ENCODE measurements at regions of chr11 and their contacts with region 1.

Region 1: DNA sequence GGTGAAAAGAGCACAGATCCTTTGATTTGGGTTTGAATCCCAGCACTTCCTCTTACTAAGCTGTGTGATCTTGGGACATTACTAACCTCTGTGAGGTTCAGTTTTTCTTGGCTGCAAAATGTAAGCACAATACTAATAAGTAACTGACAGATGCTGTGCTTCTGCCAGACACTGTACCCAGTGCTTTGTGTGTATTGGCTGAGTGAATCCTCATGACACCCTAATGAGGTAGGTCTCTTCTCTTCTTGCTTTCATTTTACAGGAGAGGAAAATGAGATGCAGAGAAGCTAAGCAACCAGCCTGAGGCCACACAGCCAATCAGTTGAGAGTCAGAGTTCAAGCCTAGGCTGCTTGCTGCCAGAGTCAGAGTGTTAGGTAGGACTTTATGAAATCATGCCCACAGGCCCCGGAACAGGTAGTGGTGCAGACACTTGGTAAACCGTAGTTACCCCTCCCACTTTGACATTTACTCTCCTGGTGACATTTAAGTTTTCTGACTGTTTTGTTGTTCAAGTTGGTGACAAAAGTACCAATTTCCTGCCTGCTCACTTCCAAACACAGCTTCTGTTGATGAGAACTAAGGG is 21.2 kb downstream of the PTPRJ start:
- DNase-seq: peak; percentile 68 to 97 (median 78)
- ATAC-seq: peak; percentile 90
- H3K4me3 ChIP-seq: peak overlapping the region; percentile 24
- H3K4me3 Mint-ChIP-seq: peak overlapping the region; percentile 74
- H3K27ac ChIP-seq: peak overlapping the region; percentile 63 to 74
- H3K27ac Mint-ChIP-seq: peak overlapping the region; percentile 93
- H3K4me1 ChIP-seq: peaks cover 92% of the 10 kb centered on the region
- H3K4me1 Mint-ChIP-seq: peaks cover 91% of the 10 kb centered on the region
- H3K27me3 ChIP-seq: no peaks in the 10 kb centered on the region
- H3K27me3 Mint-ChIP-seq: no peaks in the 10 kb centered on the region
- CTCF ChIP-seq: no peak

Region 2: GRCh38 chr11:47750725-47751124 is 250.8 kb before region 1 on chr11:
- CTCF ChIA-PET with region 1: no interaction called
- POLR2A ChIA-PET with region 1: no interaction called
- intact Hi-C with region 1: no loop called
- DNase-seq: no peak
- ATAC-seq: no peak
- H3K4me3 ChIP-seq: no peak overlapping the region
- H3K4me3 Mint-ChIP-seq: no peak overlapping the region
- H3K27ac ChIP-seq: no peak overlapping the region
- H3K27ac Mint-ChIP-seq: peak overlapping the region; percentile 47
- H3K4me1 ChIP-seq: no peaks in the 10 kb centered on the region
- H3K4me1 Mint-ChIP-seq: peaks cover 21% of the 10 kb centered on the region
- H3K27me3 ChIP-seq: no peaks in the 10 kb centered on the region
- H3K27me3 Mint-ChIP-seq: no peaks in the 10 kb centered on the region
- CTCF ChIP-seq: no peak

Region 3: GRCh38 chr11:47863189-47863892 is 138.2 kb before region 1 on chr11:
- CTCF ChIA-PET with region 1: no interaction called
- POLR2A ChIA-PET with region 1: no interaction called
- intact Hi-C with region 1: loop called in 1 of 2 experiments (anchors 10 kb)
- DNase-seq: peak in 3 of 14 experiments; percentile 46 to 84 (median 49)
- ATAC-seq: peak; percentile 71
- H3K4me3 ChIP-seq: no peak overlapping the region
- H3K4me3 Mint-ChIP-seq: peak overlapping the region; percentile 43
- H3K27ac ChIP-seq: no peak overlapping the region
- H3K27ac Mint-ChIP-seq: peak overlapping the region; percentile 36
- H3K4me1 ChIP-seq: peaks cover 33% of the 10 kb centered on the region
- H3K4me1 Mint-ChIP-seq: peaks cover 51% of the 10 kb centered on the region
- H3K27me3 ChIP-seq: no peaks in the 10 kb centered on the region
- H3K27me3 Mint-ChIP-seq: no peaks in the 10 kb centered on the region
- CTCF ChIP-seq: no peak

Region 4: GRCh38 chr11:47941907-47942558 is 59.5 kb before region 1 on chr11:
- CTCF ChIA-PET with region 1: no interaction called
- POLR2A ChIA-PET with region 1: no interaction called
- intact Hi-C with region 1: no loop called
- DNase-seq: no peak
- ATAC-seq: no peak
- H3K4me3 ChIP-seq: no peak overlapping the region
- H3K4me3 Mint-ChIP-seq: no peak overlapping the region
- H3K27ac ChIP-seq: no peak overlapping the region
- H3K27ac Mint-ChIP-seq: no peak overlapping the region
- H3K4me1 ChIP-seq: peaks cover 9% of the 10 kb centered on the region
- H3K4me1 Mint-ChIP-seq: peaks cover 10% of the 10 kb centered on the region
- H3K27me3 ChIP-seq: no peaks in the 10 kb centered on the region
- H3K27me3 Mint-ChIP-seq: no peaks in the 10 kb centered on the region
- CTCF ChIP-seq: no peak

Region 5: GRCh38 chr11:47980245-47981049 is 21.1 kb before region 1 on chr11 and contains the start of gene PTPRJ:
- CTCF ChIA-PET with region 1: interaction called, 3 read pairs
- POLR2A ChIA-PET with region 1: interaction called, 19 read pairs
- intact Hi-C with region 1: loop called (anchors 2 kb)
- DNase-seq: peak; percentile 36 to 88 (median 57)
- ATAC-seq: peak; percentile 68
- H3K4me3 ChIP-seq: peak within 1 kb of the TSS; percentile 70
- H3K4me3 Mint-ChIP-seq: peak within 1 kb of the TSS; percentile 98
- H3K27ac ChIP-seq: peak within 1 kb of the TSS in 1 of 2 donors; percentile 41
- H3K27ac Mint-ChIP-seq: peak within 1 kb of the TSS; percentile 91
- H3K4me1 ChIP-seq: peaks cover 39% of the 10 kb centered on the region
- H3K4me1 Mint-ChIP-seq: peaks cover 38% of the 10 kb centered on the region
- H3K27me3 ChIP-seq: no peaks in the 10 kb centered on the region
- H3K27me3 Mint-ChIP-seq: no peaks in the 10 kb centered on the region
- CTCF ChIP-seq: no peak
- total RNA-seq, gene PTPRJ: 26.6 to 28.9 TPM

Region 6: DNA sequence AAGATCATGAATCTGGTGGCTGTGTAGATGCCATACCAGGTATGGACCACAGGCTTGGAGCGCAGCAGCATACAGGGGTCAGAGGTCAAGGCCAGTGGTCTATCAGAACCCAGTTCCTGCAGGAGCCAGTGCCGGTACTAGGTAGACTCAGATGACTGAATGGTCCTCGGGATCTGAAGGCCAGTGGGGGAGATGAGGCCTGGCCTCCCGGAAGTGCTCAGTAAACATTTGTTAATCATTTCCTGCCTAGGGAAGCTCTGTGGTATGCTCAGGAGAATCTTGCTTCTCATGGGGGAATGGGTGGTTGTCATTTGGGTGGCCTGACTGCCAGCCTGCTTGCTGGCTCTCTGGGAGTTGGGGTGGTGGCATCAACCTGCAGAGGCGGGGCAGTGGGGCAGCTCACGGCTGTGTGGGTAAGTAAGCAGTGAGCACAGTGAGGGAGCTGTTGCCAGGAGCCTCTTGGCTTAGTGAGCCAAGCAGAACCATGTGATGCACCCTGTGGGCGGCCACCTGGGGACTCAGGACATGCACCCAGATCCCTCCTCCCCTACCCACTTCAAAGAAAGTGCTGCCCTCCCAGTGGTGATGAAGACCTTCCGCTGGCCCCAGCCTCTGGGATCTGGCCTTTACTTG is 11.9 kb after region 1 on chr11:
- CTCF ChIA-PET with region 1: interaction called, 8 read pairs
- POLR2A ChIA-PET with region 1: interaction called, 52 read pairs
- intact Hi-C with region 1: loop called in 1 of 2 experiments (anchors 1 kb)
- DNase-seq: peak in 12 of 14 experiments; percentile 33 to 80 (median 50)
- ATAC-seq: peak; percentile 56
- H3K4me3 ChIP-seq: no peak overlapping the region
- H3K4me3 Mint-ChIP-seq: peak overlapping the region; percentile 79
- H3K27ac ChIP-seq: peak overlapping the region; percentile 61 to 88
- H3K27ac Mint-ChIP-seq: peak overlapping the region; percentile 97
- H3K4me1 ChIP-seq: peaks cover 100% of the 10 kb centered on the region
- H3K4me1 Mint-ChIP-seq: peaks cover 85% of the 10 kb centered on the region
- H3K27me3 ChIP-seq: no peaks in the 10 kb centered on the region
- H3K27me3 Mint-ChIP-seq: no peaks in the 10 kb centered on the region
- CTCF ChIP-seq: no peak

Region 7: GRCh38 chr11:48034926-48035871 is 33.7 kb after region 1 on chr11:
- CTCF ChIA-PET with region 1: interaction called, 3 read pairs
- POLR2A ChIA-PET with region 1: interaction called, 10 read pairs
- intact Hi-C with region 1: no loop called
- DNase-seq: no peak
- ATAC-seq: no peak
- H3K4me3 ChIP-seq: no peak overlapping the region
- H3K4me3 Mint-ChIP-seq: peak overlapping the region; percentile 8
- H3K27ac ChIP-seq: no peak overlapping the region
- H3K27ac Mint-ChIP-seq: peak overlapping the region; percentile 66
- H3K4me1 ChIP-seq: peaks cover 48% of the 10 kb centered on the region
- H3K4me1 Mint-ChIP-seq: peaks cover 80% of the 10 kb centered on the region
- H3K27me3 ChIP-seq: no peaks in the 10 kb centered on the region
- H3K27me3 Mint-ChIP-seq: no peaks in the 10 kb centered on the region
- CTCF ChIP-seq: no peak